ENCODE measurements at regions of chr11 and their contacts with region 1.

Region 1: GRCh38 chr11:47259178-47259977 is 1.6 kb downstream of the NR1H3 start:
- DNase-seq: no peak
- H3K4me3 ChIP-seq: no peak overlapping the region
- H3K27ac ChIP-seq: no peak overlapping the region
- H3K27me3 ChIP-seq: no peaks in the 10 kb centered on the region
- CTCF ChIP-seq: peak; percentile 70

Region 2: GRCh38 chr11:47176328-47177228 is 82.8 kb before region 1 on chr11 and contains the start of gene ARFGAP2:
- CTCF ChIA-PET with region 1: interaction called, 48 read pairs
- POLR2A ChIA-PET with region 1: no interaction called
- DNase-seq: peak; percentile 84
- H3K4me3 ChIP-seq: peak within 1 kb of the TSS; percentile 98
- H3K27ac ChIP-seq: peak within 1 kb of the TSS; percentile 89
- H3K27me3 ChIP-seq: no peaks in the 10 kb centered on the region
- CTCF ChIP-seq: no peak
- polyA plus RNA-seq, gene ARFGAP2: 38.6 and 44.4 TPM in 2 replicates

Region 3: DNA sequence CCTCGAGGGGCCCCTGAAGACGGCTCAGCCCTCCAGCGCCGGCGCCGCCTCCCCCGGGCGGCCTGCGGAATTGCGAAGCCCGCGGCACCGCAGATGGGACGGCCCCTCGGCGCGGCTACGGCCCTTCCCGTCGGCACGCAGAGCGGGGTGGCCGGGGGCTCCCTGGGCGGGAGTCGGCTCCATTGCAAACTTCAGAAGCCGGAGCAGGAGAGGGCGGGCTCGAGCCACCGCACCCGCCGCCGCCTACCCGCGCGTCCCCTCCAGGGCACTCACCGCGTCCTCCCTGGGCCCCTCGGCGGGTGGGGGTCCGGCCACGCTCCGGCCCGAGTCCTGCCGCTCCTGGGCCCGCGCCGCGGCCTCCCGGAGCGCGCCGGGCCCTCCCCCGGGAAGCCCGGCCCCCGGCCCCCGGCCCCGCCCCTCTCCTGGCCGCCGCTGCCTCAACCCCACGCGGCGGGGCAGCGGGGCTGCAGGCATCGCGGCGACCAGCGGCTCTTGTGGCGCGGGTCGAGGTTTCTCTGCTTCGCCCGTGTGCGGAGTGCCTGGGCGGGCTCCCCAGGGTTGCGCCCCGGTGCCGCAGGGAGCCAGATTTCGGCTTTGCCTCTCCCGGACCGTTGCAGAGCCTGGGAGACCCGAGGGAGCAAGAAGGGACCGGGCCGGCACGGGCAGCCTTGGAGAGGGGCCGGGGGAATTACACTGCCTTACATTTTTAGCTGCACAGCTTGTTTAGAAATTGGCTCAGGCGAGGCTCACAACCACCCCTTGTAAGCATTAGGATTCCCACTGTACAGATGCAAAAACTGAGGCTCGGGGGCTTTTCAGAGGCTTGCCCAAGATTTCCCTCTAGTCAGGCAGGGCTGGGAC is 73.1 kb before region 1 on chr11 and contains the start of gene PACSIN3:
- CTCF ChIA-PET with region 1: interaction called, 13 read pairs
- POLR2A ChIA-PET with region 1: interaction called, 7 read pairs
- DNase-seq: no peak
- H3K4me3 ChIP-seq: peak within 1 kb of the TSS; percentile 67
- H3K27ac ChIP-seq: peak within 1 kb of the TSS; percentile 57
- H3K27me3 ChIP-seq: no peaks in the 10 kb centered on the region
- CTCF ChIP-seq: no peak
- polyA plus RNA-seq, gene PACSIN3: 15.3 and 19.7 TPM in 2 replicates

Region 4: DNA sequence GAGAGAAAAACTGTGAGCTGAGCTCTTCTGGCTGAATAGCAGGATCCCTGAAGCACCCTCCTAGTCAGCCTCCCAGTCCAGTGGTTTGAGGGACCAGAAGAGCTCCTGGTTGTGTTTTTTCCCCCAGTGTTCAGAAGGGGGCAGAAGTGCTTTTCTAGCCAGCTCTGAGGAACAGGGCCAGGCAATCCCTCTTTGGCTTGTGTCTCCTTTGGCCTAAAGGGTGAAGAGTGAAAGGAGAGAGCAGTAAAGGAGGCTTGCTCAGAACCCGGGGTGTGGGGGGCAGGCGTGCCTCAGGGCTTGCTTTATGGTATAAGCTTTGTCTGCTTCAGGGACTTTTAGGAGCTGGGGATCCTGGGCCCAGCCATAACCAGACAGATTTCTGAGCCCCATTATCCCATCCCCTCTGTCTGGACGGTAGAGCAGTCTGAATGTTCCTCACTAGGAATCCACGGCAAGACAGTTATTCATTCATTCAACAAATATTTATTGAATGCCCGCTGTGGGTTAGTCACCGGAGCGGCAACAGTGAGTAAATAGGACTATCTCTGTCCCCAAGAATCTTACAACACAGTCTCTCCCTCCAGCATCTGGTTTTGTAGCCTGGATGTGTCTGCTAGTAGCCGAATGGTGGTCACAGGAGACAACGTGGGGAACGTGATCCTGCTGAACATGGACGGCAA is 25.2 kb before region 1 on chr11:
- CTCF ChIA-PET with region 1: interaction called, 10 read pairs
- POLR2A ChIA-PET with region 1: interaction called, 3 read pairs
- DNase-seq: no peak
- H3K4me3 ChIP-seq: no peak overlapping the region
- H3K27ac ChIP-seq: no peak overlapping the region
- H3K27me3 ChIP-seq: no peaks in the 10 kb centered on the region
- CTCF ChIP-seq: peak; percentile 48

Region 5: DNA sequence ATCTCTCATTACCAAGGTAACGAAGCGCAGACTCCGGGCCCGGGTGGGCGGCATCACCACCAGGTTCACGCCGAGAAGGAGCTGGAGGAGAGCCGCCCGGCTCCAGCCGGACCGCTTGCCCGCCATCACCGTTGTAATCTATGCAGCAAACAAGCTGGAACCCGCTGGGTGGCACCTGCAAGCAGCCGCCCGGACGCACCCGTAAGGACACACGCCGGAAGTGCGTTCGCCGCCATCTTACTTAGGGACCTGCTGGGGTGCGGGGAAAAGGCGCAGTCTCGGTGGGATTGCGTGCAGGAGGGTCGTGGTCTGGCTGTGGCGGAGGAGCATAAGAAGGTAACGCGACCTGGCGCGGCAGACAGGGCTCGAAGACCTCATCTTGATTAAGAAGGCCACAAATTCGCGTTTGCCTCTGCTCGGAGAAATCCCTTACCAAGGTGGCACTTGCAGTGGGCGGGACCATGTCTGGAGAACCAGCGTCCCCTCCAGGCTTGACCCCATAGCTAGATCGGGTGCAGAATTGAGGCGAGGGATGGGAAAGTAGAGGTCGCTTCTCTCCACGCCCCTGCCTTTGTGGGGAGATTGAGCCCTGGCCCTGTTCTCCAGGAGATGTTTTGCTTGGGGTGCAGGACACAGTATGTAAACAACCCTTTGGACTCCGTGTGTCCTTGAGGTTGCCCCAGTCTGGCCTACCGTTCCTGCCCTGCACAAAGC is 10.6 kb before region 1 on chr11 and contains the start of gene ACP2:
- CTCF ChIA-PET with region 1: interaction called, 31 read pairs
- POLR2A ChIA-PET with region 1: interaction called, 19 read pairs
- DNase-seq: peak; percentile 72
- H3K4me3 ChIP-seq: peak within 1 kb of the TSS; percentile 97
- H3K27ac ChIP-seq: peak within 1 kb of the TSS; percentile 77
- H3K27me3 ChIP-seq: no peaks in the 10 kb centered on the region
- CTCF ChIP-seq: peak; percentile 41
- polyA plus RNA-seq, gene ACP2: 20.8 and 25.1 TPM in 2 replicates

Region 6: DNA sequence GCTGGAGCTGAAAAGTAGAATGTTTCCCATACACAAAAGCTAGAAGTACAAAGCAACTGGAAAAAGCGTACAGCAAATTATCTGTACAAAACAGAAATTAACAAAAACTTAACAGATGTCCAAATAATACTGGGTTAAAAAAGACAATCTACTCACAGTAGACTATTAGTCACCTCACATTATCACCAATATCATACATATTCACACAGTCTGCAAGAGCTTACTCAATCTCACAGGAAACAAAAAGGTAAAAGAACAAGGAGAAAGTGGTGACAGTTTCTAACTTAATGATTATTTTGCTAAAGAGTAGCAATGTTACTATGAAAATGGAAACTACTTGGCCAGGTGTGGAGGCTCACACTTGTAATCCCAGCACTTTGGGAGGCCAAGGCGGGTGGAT is 281.7 kb after region 1 on chr11:
- CTCF ChIA-PET with region 1: no interaction called
- POLR2A ChIA-PET with region 1: no interaction called
- DNase-seq: no peak
- H3K4me3 ChIP-seq: no peak overlapping the region
- H3K27ac ChIP-seq: peak overlapping the region; percentile 21
- H3K27me3 ChIP-seq: no peaks in the 10 kb centered on the region
- CTCF ChIP-seq: no peak